ENCODE measurements at regions of chr1 and their contacts with region 1.

Region 1: GRCh38 chr1:244652699-244653466 is at the start of gene DESI2:
- DNase-seq: peak; percentile 98
- ATAC-seq: peak; percentile 96
- H3K4me3 Mint-ChIP-seq: peak within 1 kb of the TSS; percentile 76
- H3K27ac Mint-ChIP-seq: peak within 1 kb of the TSS; percentile 95
- H3K4me1 Mint-ChIP-seq: peaks cover 19% of the 10 kb centered on the region
- H3K27me3 Mint-ChIP-seq: no peaks in the 10 kb centered on the region
- total RNA-seq, gene DESI2: 24.5 to 26.0 TPM

Region 2: DNA sequence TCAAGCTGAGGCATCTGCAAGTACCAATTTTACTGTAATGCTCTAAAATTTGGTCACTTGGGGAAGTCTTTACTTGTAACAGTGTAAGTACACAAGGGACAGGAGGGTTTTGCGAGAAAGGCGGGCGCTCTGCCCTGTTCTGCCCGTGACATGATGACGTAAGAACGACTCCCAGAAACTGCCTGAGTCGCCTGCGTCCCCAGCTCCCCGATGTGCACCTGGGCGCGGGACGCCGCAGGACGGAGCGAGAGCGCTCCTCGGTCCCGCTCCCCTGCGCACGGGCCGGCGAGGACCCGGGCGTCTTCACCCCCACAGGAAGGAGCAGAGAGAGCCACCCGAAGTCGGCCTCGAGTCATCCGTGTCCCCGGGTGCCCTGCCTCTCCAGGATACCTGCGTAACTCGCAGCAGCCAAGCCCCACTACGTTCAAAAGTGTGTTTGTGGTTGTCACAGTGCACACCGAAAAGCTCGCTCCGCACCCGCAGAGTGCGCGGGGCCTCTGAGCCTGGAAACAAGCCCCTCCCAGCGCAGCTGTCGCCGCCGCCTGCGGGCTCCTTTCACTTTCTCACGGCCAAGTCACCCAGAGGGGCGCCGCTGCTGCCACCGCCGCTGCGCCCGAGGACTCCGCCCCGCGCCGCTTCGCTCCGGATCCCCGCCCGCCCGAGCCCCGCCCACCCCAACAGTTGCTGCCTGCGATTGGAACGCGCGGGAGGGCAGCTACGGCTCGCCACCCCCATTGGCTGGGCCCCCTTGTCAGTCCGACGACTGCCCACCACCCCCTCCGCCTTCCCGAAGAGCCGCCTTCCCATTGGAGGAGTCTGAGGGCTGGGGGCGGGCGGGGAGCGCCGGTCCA is 605.0 kb before region 1 on chr1:
- CTCF ChIA-PET with region 1: no interaction called
- POLR2A ChIA-PET with region 1: no interaction called
- intact Hi-C with region 1: loop called in 1 of 2 experiments (anchors 2 kb)
- DNase-seq: peak; percentile 98
- ATAC-seq: peak; percentile 92
- H3K4me3 Mint-ChIP-seq: peak overlapping the region; percentile 93
- H3K27ac Mint-ChIP-seq: peak overlapping the region; percentile 97
- H3K4me1 Mint-ChIP-seq: peaks cover 35% of the 10 kb centered on the region
- H3K27me3 Mint-ChIP-seq: no peaks in the 10 kb centered on the region

Region 3: GRCh38 chr1:244461245-244462071 is 191.4 kb before region 1 on chr1 and contains the start of gene CATSPERE:
- CTCF ChIA-PET with region 1: no interaction called
- POLR2A ChIA-PET with region 1: no interaction called
- intact Hi-C with region 1: loop called in 1 of 2 experiments (anchors 2 kb)
- DNase-seq: peak; percentile 83
- ATAC-seq: peak; percentile 98
- H3K4me3 Mint-ChIP-seq: peak within 1 kb of the TSS; percentile 69
- H3K27ac Mint-ChIP-seq: peak within 1 kb of the TSS; percentile 99
- H3K4me1 Mint-ChIP-seq: peaks cover 14% of the 10 kb centered on the region
- H3K27me3 Mint-ChIP-seq: no peaks in the 10 kb centered on the region
- total RNA-seq, gene CATSPERE: 0.11 TPM in 1 of 2 experiments, not detected in the other

Region 4: GRCh38 chr1:244552340-244552739 is 100.5 kb before region 1 on chr1:
- CTCF ChIA-PET with region 1: no interaction called
- POLR2A ChIA-PET with region 1: no interaction called
- intact Hi-C with region 1: no loop called
- DNase-seq: no peak
- ATAC-seq: no peak
- H3K4me3 Mint-ChIP-seq: no peak overlapping the region
- H3K27ac Mint-ChIP-seq: no peak overlapping the region
- H3K4me1 Mint-ChIP-seq: no peaks in the 10 kb centered on the region
- H3K27me3 Mint-ChIP-seq: no peaks in the 10 kb centered on the region

Region 5: DNA sequence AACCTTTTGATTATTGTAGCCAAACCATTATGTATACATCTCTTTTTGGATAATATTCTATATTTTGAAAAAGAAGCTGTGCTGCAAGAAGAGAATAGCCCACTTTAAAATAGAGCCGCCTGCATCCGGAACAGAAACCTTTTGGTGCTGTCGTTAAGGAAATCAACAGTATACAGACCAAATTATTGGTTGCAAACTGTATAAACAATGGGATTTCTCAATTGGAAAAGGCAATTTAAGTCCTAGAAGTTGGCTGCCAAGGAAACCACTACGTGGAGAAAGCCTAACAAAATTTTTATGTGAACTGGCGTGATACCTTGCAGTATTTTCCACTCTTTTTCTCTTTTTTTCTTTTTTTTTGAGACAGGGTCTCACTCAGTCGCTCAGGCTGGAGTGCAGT is 25.8 kb after region 1 on chr1:
- CTCF ChIA-PET with region 1: no interaction called
- POLR2A ChIA-PET with region 1: no interaction called
- intact Hi-C with region 1: no loop called
- DNase-seq: no peak
- ATAC-seq: no peak
- H3K4me3 Mint-ChIP-seq: no peak overlapping the region
- H3K27ac Mint-ChIP-seq: no peak overlapping the region
- H3K4me1 Mint-ChIP-seq: peaks cover 19% of the 10 kb centered on the region
- H3K27me3 Mint-ChIP-seq: no peaks in the 10 kb centered on the region

Region 6: DNA sequence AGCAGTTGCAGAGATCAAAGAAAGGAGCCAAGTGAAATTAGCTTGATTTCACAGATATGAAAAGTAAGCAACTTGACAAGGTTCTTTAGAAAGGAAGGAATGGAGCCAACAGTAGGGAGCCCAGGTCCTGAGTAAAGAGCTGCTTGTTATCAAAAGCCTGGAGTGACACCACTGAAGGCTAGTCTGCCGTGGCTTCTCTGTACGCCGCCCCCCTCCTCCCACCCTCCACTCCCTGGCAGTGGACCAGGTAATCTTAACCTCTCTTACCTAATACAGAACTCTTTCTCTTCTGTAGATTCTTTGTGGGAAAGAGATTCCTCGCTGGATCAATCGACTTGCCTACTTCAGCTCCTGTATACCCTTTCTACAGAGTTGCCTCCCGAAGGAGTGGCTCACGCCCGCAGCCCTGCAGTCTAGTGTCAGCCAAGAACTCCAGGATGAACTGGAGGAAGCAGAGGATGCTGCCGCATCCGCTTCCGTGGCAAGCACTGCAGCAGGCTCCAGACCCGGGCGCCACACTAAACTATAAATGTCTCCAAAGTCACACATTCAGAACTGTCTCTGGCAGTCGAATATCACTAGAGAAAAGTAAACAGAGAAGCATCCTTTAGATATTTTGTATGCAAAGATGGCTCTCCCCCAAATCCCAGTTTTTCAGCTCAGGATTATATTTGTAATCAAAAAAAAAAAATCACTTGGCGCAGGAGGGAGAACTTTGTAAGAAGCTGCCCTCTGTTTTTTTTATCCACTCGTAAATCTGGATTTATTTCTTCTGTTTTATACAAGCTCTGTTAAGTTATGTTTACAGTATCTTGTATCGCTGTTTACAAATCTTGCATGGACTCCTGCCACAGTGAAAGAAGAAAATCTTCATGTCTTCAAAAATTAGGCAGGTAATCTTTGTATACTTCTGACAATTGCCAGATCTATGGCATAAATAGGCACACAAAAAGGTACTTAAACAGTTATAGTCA is 52.7 kb after region 1 on chr1:
- CTCF ChIA-PET with region 1: no interaction called
- POLR2A ChIA-PET with region 1: no interaction called
- intact Hi-C with region 1: no loop called
- DNase-seq: no peak
- ATAC-seq: no peak
- H3K4me3 Mint-ChIP-seq: no peak overlapping the region
- H3K27ac Mint-ChIP-seq: no peak overlapping the region
- H3K4me1 Mint-ChIP-seq: no peaks in the 10 kb centered on the region
- H3K27me3 Mint-ChIP-seq: no peaks in the 10 kb centered on the region

Region 7: GRCh38 chr1:244730153-244730933 is 77.5 kb after region 1 on chr1:
- CTCF ChIA-PET with region 1: no interaction called
- POLR2A ChIA-PET with region 1: no interaction called
- intact Hi-C with region 1: loop called (anchors 2 to 5 kb)
- DNase-seq: peak; percentile 58
- ATAC-seq: peak; percentile 73
- H3K4me3 Mint-ChIP-seq: peak overlapping the region; percentile 74
- H3K27ac Mint-ChIP-seq: peak overlapping the region; percentile 67
- H3K4me1 Mint-ChIP-seq: peaks cover 10% of the 10 kb centered on the region
- H3K27me3 Mint-ChIP-seq: peaks cover 10% of the 10 kb centered on the region

Region 8: DNA sequence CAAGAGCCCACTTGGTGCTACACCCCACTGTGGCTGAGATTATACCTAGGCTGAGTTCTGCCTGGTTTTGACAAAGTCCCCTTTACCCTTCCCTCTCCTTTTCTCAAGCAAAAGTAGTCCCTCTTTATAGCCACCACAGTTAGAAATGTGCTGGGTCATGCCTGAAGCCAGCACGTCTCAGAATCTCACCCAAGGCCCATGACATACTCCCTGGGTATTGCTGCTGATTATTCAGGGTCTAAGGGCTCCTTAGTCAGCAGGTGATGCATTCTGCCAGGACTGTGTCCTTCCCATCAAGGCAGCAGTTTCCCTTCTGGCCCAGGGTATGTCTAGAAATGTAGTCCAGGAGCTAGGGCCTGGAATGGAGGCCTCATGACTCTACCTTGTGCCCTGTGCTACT is 115.3 kb after region 1 on chr1:
- CTCF ChIA-PET with region 1: no interaction called
- POLR2A ChIA-PET with region 1: no interaction called
- intact Hi-C with region 1: no loop called
- DNase-seq: no peak
- ATAC-seq: no peak
- H3K4me3 Mint-ChIP-seq: no peak overlapping the region
- H3K27ac Mint-ChIP-seq: no peak overlapping the region
- H3K4me1 Mint-ChIP-seq: no peaks in the 10 kb centered on the region
- H3K27me3 Mint-ChIP-seq: peaks cover 8% of the 10 kb centered on the region

Region 9: GRCh38 chr1:244796718-244797406 is 144.0 kb after region 1 on chr1:
- CTCF ChIA-PET with region 1: interaction called, 5 read pairs
- POLR2A ChIA-PET with region 1: no interaction called
- intact Hi-C with region 1: loop called in 1 of 2 experiments (anchors 2 kb)
- DNase-seq: peak; percentile 70
- ATAC-seq: peak; percentile 40
- H3K4me3 Mint-ChIP-seq: no peak overlapping the region
- H3K27ac Mint-ChIP-seq: no peak overlapping the region
- H3K4me1 Mint-ChIP-seq: peaks cover 2% of the 10 kb centered on the region
- H3K27me3 Mint-ChIP-seq: no peaks in the 10 kb centered on the region